ENCODE measurements at regions of chr14 and their contacts with region 1.

Region 1: GRCh38 chr14:21071225-21072030 is 1.3 kb downstream of the ARHGEF40 start:
- DNase-seq: no peak
- H3K4me3 ChIP-seq: peak overlapping the region; percentile 76 to 86 (median 81)
- H3K27ac ChIP-seq: peak overlapping the region; percentile 88 to 90 (median 90)
- H3K4me1 ChIP-seq: peaks cover 33 to 56% (median 50%) of the 10 kb centered on the region in 4 donors
- H3K27me3 ChIP-seq: no peaks in the 10 kb centered on the region
- CTCF ChIP-seq: no peak
- EP300 ChIP-seq: no peak
- POLR2A ChIP-seq: no peak

Region 2: DNA sequence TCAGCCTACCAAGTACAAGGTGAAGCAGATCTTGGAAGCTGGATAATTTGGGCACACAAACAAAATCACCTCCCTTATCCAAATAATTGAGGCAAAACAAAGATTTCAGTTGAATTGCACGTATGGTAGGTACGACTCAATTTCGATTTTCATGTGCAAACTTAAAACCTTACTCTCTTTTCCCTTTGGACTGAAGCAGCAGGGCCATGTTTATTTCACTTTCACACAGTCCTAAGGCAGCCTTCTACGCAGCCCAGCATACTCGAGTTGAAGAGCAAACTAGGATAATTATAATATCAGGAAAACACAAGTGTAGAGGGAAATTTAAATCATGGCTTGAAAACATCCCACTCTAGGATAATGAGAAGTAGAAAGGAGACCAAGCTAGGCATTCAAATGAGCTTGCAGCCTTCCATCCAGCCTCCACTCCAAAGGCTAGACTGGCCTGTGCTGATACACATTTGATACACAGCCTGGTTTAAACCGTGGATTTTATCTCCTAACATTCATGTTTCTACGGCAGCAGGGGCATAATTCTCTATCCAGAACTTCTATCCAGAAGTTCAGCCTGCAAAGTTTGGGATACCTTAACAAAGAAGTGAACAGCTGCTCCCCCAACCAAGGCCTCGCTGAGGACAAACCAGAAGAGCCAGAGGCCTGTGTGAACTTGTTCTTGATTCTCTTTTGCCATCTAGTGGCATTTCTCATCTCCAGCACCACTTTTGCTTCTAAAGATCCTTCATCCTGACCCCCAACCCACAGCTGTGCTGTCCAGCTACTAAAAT is 31.7 kb before region 1 on chr14:
- intact Hi-C with region 1: no loop called
- DNase-seq: no peak
- H3K4me3 ChIP-seq: peak overlapping the region in 2 of 4 donors; percentile 4 to 24
- H3K27ac ChIP-seq: peak overlapping the region; percentile 74 to 81 (median 77)
- H3K4me1 ChIP-seq: peaks cover 44 to 48% (median 44%) of the 10 kb centered on the region in 4 donors
- H3K27me3 ChIP-seq: no peaks in the 10 kb centered on the region
- CTCF ChIP-seq: peak; percentile 77 to 82 (median 81)
- EP300 ChIP-seq: no peak
- POLR2A ChIP-seq: no peak

Region 3: DNA sequence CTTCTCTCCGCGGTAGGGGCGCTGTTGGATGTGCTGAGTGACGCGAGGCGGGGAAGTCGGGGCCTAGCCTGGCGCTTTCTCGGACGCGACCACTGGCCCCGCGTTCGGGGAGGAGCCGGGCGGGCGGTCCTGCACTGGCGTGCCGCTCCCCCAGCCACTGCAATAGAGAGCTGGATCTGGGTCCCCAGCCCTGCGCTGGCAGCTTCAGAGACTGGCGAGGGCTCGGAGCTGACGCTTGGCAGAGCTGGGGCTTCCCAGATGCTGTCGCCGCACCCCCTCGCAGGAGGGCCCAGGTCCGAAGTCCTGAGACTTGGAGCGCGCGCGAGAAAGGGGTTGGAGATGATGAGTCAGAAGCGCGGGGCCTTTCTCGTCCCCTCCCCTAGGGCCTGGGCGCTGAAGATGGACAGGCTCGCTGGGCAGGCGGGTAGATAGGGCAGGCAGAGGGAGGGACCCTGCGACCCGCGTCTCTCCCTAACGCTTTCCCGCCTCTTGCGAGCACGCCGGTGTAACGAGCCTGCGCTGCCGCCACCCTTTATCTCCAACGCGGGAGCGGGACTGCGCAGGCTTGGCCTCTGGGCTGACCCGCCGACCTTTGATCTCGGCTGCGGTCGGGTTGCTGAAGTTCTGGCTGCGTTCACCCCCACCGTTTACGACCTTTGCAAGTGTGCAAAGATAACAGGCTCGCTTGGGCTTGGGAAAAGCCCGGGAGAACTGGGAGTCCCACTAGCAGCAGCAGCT is 32.5 kb after region 1 on chr14:
- intact Hi-C with region 1: loop called (anchors 2 kb)
- DNase-seq: peak; percentile 99
- H3K4me3 ChIP-seq: peak overlapping the region; percentile 62 to 75 (median 71)
- H3K27ac ChIP-seq: peak overlapping the region; percentile 93 to 99 (median 98)
- H3K4me1 ChIP-seq: peaks cover 44 to 60% (median 57%) of the 10 kb centered on the region in 4 donors
- H3K27me3 ChIP-seq: no peaks in the 10 kb centered on the region
- CTCF ChIP-seq: peak; percentile 49 to 86 (median 68)
- EP300 ChIP-seq: no peak
- POLR2A ChIP-seq: peak; percentile 75

Measured in esophagus muscularis mucosa (tissue), 4 donors.